ENCODE measurements at regions of chr6 and their contacts with region 1.

Region 1: GRCh38 chr6:35209081-35209480 is 4.7 kb upstream of the SCUBE3 start:
- DNase-seq: no peak
- H3K4me3 Mint-ChIP-seq: no peak overlapping the region
- H3K27ac Mint-ChIP-seq: no peak overlapping the region
- H3K4me1 Mint-ChIP-seq: peaks cover 5% of the 10 kb centered on the region
- H3K27me3 Mint-ChIP-seq: peaks cover 55% of the 10 kb centered on the region

Region 2: GRCh38 chr6:35092362-35093117 is 116.5 kb before region 1 on chr6:
- CTCF ChIA-PET with region 1: interaction called, 12 read pairs
- POLR2A ChIA-PET with region 1: no interaction called
- intact Hi-C with region 1: no loop called
- DNase-seq: no peak
- H3K4me3 Mint-ChIP-seq: no peak overlapping the region
- H3K27ac Mint-ChIP-seq: no peak overlapping the region
- H3K4me1 Mint-ChIP-seq: no peaks in the 10 kb centered on the region
- H3K27me3 Mint-ChIP-seq: no peaks in the 10 kb centered on the region

Region 3: GRCh38 chr6:35173427-35174087 is 35.5 kb before region 1 on chr6:
- CTCF ChIA-PET with region 1: interaction called, 10 read pairs
- POLR2A ChIA-PET with region 1: no interaction called
- intact Hi-C with region 1: no loop called
- DNase-seq: peak; percentile 23
- H3K4me3 Mint-ChIP-seq: no peak overlapping the region
- H3K27ac Mint-ChIP-seq: no peak overlapping the region
- H3K4me1 Mint-ChIP-seq: peaks cover 15% of the 10 kb centered on the region
- H3K27me3 Mint-ChIP-seq: peaks cover 2% of the 10 kb centered on the region

Measured in activated CD4-positive, alpha-beta memory T cell treated with anti-CD3 and anti-CD28 coated beads for 36 hours (primary cell).